Right cardiac atrium (tissue), 5 donors: ENCODE measurements at regions of chr19 and their contacts with region 1.

Region 1: DNA sequence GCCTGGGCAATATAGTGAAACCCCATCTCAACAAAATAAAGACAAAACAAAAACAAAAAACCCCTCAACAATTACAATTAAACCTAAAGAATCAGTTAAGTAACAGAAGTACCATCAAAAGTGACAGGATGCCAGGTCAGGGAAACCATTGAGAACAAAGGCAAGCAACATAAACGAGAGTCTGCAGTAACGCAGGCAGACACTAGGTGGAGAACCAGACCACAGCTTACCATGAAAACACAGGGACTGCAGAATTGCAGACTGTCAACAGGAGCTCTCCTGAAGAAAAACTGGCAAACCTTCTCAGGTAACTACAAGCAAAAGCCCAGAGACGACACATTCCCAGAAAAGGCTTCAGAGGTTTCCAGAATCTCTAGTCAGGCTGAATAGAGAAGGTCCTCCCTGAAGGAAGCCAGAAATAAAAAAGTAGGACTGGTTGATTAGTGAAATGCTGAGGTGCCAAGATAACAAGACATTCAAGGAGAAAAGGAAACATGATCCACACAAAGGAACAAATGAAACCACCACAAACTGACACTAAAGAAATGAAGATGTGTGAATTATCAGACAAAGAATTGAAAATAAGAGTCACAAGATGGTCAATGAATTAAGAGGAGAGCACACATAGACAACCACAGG is 2.2 kb upstream of the ZNF665 start:
- DNase-seq: peak; percentile 66 to 89 (median 72)
- ATAC-seq: peak; percentile 34 to 47
- H3K4me3 ChIP-seq: no peak overlapping the region
- H3K27ac ChIP-seq: no peak overlapping the region
- H3K4me1 ChIP-seq: peaks cover 3% of the 10 kb centered on the region
- H3K27me3 ChIP-seq: no peaks in the 10 kb centered on the region

Region 2: GRCh38 chr19:53076977-53077376 is 118.4 kb before region 1 on chr19:
- intact Hi-C with region 1: loop called in 1 of 4 experiments (anchors 10 kb)
- DNase-seq: peak; percentile 60 to 87 (median 78)
- ATAC-seq: peak; percentile 79 to 84
- H3K4me3 ChIP-seq: no peak overlapping the region
- H3K27ac ChIP-seq: no peak overlapping the region
- H3K4me1 ChIP-seq: no peaks in the 10 kb centered on the region
- H3K27me3 ChIP-seq: no peaks in the 10 kb centered on the region

Region 3: DNA sequence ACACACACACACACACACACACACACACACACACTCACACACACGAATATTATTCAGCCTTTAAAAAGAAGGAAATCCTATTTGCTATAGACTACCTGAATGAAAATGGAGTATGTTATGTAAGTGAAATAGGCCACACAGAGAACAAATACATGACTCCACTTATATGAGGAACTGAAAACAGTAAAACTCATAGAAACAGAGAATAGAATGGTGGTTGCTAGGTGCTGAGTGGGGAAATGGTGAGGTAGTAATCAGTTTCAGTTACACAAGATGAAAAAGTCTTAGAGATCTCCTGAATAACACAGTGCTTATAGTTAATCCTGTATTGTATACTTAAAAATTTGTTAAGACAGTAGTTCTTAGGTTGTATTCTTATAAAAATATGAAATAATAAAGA is 51.1 kb after region 1 on chr19:
- intact Hi-C with region 1: no loop called
- DNase-seq: no peak
- ATAC-seq: no peak
- H3K4me3 ChIP-seq: no peak overlapping the region
- H3K27ac ChIP-seq: no peak overlapping the region
- H3K4me1 ChIP-seq: no peaks in the 10 kb centered on the region
- H3K27me3 ChIP-seq: no peaks in the 10 kb centered on the region

Region 4: DNA sequence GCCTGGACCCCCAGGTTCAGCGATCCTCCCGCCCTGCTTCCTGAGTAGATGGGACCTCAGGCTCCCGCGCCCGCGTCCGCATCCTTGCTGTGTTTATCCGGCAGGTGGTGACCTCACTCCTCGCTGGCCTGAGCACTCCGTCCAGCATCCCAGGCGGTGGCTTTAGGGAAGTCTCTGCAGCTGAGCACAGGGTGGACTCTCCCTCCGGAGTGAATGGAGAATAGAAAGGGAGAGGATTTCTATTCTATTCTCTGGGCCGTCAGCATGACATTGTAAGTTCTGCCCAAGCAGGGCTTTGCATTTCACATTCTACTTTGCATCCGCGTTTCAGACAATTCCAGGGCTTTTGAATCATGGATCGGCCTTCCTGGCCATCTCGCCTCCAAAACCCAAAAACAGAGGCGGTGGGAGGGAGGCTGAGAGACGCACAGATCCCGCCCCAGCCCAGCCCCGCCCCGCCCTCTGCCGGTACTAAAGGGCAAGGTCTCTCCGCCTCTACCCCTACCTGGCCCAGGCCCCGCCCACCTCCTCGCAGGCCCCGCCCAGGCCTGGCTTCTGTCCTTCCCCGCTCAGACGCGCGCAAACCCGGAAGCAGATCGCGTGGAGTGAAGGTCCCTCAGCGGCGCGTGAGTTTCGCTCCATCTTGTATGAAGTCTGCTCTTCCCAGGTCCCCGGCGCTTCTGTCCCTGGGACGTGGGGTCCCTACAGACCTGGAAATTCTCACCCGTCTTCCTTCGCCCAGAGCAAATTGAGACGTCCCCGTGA is 169.9 kb after region 1 on chr19 and contains the start of gene ZNF525:
- intact Hi-C with region 1: loop called in 2 of 4 experiments (anchors 10 kb)
- DNase-seq: peak; percentile 86 to 96 (median 95)
- ATAC-seq: peak; percentile 100
- H3K4me3 ChIP-seq: peak within 1 kb of the TSS; percentile 72
- H3K27ac ChIP-seq: peak within 1 kb of the TSS; percentile 21
- H3K4me1 ChIP-seq: peaks cover 3% of the 10 kb centered on the region
- H3K27me3 ChIP-seq: no peaks in the 10 kb centered on the region
- total RNA-seq, gene ZNF525: 5.4 to 9.3 (median 7.1) TPM

Region 5: DNA sequence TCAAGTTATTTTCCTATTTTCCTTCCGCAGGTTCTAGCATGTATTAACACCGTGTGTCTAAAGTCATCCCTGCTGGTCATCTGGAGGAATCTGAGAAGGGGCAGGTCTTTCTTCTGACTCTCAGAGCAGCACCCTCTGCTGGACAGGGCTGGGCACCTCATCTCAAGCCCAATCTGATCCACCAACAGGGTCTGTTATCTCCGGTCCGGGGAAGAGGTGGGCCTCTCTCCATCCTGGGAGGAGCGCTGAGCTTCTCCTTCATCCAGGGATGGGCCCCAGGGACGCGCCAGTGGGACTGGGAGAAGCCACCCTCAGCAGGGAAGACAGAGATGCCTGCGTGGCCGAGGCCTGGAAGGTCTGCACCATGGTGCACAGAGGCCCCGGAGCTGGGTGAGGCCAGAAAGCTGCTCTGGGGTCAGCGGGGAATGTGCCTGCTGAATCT is 316.6 kb after region 1 on chr19:
- intact Hi-C with region 1: loop called in 1 of 4 experiments (anchors 10 kb)
- DNase-seq: peak; percentile 45 to 78 (median 76)
- ATAC-seq: peak; percentile 64 to 85
- H3K4me3 ChIP-seq: no peak overlapping the region
- H3K27ac ChIP-seq: no peak overlapping the region
- H3K4me1 ChIP-seq: no peaks in the 10 kb centered on the region
- H3K27me3 ChIP-seq: no peaks in the 10 kb centered on the region